ENCODE measurements at regions of chr12 and their contacts with region 1.

Region 1: DNA sequence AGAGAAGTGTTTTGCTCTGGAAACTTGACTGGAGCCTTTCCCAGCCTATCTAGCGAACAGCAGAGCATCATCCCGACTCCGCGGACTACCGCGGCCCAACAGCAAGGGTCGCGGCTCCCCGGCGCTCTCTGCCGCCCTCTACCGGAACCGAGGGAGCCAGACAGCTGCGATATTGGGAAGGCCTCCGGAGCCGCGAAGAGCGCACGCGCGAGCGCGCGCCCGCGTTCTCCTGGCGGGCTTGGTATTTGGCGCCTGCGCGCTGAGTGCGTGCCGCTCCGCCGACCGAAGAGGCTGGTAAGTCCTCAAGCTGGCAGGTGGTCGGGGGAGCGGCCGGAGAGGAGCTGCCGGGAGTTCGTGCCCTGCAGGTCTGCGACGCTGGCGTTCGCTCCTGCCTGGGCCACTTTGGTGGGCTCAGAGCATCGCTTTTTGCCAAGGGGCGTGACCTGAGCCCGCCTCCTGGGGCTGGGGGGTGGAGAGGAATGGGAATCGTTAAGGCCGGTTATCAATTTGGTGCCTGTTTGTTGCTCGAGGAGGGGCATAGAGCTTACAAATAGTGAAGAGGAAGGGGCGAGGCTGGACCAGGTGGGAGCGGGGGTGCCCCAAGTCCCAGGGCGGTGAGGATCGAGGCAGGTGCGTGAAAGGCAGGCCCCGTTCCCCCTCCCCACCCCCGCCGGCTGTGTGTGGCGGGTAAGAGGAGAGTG is at the start of gene TMEM106C:
- DNase-seq: peak; percentile 72 to 89
- H3K4me3 ChIP-seq: peak within 1 kb of the TSS; percentile 85
- H3K27ac ChIP-seq: no peak within 1 kb of the TSS
- H3K4me1 ChIP-seq: peaks cover 6% of the 10 kb centered on the region; the same call in 1 of the 2 replicates
- H3K27me3 ChIP-seq: peaks cover 11% of the 10 kb centered on the region
- CTCF ChIP-seq: peak; percentile 95
- total RNA-seq, gene TMEM106C: 99.4 and 100 TPM in 2 replicates

Region 2: DNA sequence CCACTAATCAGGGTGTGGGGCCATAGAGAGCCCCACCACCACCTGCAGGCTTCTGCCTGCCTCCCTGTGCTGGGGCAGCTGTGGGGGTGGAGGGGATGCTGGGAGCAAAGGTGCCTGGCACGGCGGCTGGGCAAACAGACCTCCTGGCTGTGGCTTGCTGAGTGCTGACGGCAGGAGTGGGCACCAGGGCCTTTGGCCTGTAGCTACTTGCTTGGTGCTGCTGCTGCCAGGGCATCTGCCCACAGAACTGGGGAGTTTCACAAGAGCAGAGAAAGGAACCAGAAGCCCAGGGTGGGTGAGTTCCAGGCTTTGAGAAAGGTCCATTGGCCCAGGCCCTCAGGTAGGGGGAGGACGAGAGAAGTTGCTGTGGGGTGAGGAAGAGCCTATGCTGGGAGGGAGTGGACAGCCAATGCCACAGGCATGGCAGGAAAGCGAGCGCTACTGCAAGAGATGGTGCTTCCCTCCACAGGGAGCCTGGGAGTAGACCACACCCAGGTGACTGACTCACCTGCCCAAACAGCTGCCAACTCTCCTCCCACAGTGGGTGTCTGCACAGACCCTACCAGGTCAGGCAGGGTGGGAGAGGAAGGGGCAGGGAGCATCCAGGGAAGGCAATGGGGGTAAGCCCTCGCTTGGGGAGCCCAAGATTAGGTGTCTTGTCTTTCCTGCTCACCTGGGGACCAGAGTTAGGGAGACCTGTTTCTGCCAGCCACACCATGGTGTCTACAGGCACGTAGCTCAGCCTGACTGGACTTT is 104.8 kb before region 1 on chr12:
- CTCF ChIA-PET with region 1: interaction called, 12 read pairs
- POLR2A ChIA-PET with region 1: no interaction called
- intact Hi-C with region 1: loop called (anchors 5 kb)
- DNase-seq: peak; percentile 54 to 55
- H3K4me3 ChIP-seq: no peak overlapping the region
- H3K27ac ChIP-seq: no peak overlapping the region
- H3K4me1 ChIP-seq: peaks cover 11% of the 10 kb centered on the region
- H3K27me3 ChIP-seq: no peaks in the 10 kb centered on the region
- CTCF ChIP-seq: no peak

Region 3: GRCh38 chr12:47874316-47874715 is 89.2 kb before region 1 on chr12:
- CTCF ChIA-PET with region 1: no interaction called
- POLR2A ChIA-PET with region 1: no interaction called
- intact Hi-C with region 1: no loop called
- DNase-seq: no peak
- H3K4me3 ChIP-seq: no peak overlapping the region
- H3K27ac ChIP-seq: no peak overlapping the region
- H3K4me1 ChIP-seq: no peaks in the 10 kb centered on the region
- H3K27me3 ChIP-seq: no peaks in the 10 kb centered on the region
- CTCF ChIP-seq: no peak

Region 4: DNA sequence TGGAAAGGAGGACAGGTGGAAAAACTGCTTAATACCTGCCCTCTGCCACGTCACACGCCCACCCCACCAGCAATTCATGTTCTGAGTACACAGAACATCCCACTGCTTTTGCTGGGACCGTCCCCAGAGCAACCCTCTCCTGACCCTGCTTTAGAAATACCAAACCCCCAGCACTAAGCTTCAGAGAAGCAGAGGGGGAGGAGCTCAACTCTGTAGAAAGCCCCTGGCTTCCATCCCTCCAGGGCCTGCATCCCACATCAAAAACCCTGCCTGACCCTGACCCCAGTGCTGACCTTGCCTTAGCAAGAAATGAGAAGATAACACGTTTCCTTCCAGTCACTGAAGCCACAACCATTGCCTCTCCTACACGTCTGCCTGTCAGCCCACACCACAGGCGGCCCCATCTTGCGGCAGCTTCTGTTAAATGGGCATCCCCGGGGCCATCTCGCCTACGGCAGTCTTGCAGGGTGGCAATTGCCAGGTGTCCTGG is 78.4 kb before region 1 on chr12:
- CTCF ChIA-PET with region 1: no interaction called
- POLR2A ChIA-PET with region 1: no interaction called
- intact Hi-C with region 1: no loop called
- DNase-seq: no peak
- H3K4me3 ChIP-seq: no peak overlapping the region
- H3K27ac ChIP-seq: no peak overlapping the region
- H3K4me1 ChIP-seq: peaks cover 15% of the 10 kb centered on the region
- H3K27me3 ChIP-seq: no peaks in the 10 kb centered on the region
- CTCF ChIP-seq: no peak

Region 5: DNA sequence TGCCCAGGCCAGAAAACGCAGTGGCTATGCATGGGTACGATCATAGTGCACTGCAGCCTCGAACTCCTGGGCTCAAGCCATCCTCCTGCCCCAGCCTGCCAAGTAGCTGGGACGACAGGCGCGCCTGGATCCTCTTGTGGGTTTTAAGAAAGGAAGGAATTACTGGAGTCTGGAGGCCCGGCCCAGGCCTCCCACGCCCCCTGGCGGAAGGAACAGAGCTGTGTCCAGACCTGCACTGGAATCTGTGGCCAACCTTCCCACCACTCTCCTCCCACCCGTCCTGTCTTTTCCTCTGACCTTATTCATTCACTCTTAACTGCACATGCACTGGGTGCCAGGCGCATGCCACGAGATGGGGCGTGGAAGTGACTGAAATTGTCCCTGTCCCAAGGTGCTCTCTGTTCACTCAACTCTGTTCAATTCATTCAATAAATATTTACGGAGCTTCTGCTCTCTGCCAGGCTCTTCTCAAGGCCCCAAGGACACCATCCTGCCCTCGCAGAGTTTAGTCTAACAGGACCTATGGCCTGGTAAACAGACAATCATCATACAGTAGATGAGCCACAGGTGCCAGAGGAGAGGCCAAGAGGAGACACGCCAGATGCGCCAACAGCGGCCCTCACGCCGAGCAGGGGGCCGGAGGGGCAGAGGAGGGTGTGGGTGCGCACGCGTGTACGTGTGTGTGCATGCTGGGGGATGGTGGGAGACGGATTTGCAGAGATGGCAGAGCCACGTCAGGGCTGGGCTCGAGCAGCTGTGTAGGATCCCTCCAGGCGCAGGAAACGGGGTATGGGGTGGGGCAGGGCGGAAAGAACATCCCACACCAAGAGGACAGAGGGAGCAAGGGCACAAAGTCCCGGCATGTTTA is 13.8 kb before region 1 on chr12:
- CTCF ChIA-PET with region 1: no interaction called
- POLR2A ChIA-PET with region 1: interaction called, 10 read pairs
- intact Hi-C with region 1: no loop called
- DNase-seq: peak; percentile 66 to 79
- H3K4me3 ChIP-seq: no peak overlapping the region
- H3K27ac ChIP-seq: no peak overlapping the region
- H3K4me1 ChIP-seq: peaks cover 51% of the 10 kb centered on the region
- H3K27me3 ChIP-seq: no peaks in the 10 kb centered on the region
- CTCF ChIP-seq: peak; percentile 93

Region 6: GRCh38 chr12:48001505-48002413 is 38.3 kb after region 1 on chr12:
- CTCF ChIA-PET with region 1: no interaction called
- POLR2A ChIA-PET with region 1: no interaction called
- intact Hi-C with region 1: no loop called
- DNase-seq: peak in 1 of 2 experiments; percentile 41
- H3K4me3 ChIP-seq: peak overlapping the region; percentile 78
- H3K27ac ChIP-seq: peak overlapping the region; percentile 48; the same call in 1 of the 2 replicates
- H3K4me1 ChIP-seq: peaks cover 20% of the 10 kb centered on the region
- H3K27me3 ChIP-seq: peaks cover 57% of the 10 kb centered on the region
- CTCF ChIP-seq: no peak

Region 7: DNA sequence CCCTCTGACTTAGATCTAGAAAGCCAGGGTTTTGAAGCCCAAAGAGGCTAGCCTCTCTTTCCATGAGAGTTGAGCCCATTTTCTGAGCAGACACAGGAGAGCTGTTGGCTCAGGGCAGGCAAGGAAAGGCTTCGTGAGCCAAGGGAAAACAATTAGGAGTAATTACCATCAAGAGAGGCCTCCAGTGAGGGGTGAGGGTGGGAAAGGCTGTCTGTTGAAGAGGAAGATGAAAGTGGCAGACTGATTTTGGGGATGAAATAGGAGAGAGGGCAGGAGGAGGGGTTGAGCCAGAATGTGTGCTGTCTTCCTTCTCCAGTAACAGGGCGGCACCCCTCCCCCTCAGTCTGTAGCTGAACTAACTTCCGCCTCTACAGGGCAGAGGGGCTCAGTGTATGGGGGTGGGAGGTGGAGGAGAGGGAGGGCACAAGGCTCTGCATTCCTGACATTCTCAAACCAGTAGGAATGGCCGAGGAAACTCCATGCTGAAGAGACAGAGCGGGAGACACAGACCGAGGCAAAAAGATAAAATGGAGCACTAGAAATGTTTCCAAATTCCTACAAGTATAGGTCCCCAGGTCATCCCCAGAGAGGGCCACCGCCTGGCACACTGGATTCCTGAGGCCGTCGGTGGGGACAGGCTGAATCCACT is 73.9 kb after region 1 on chr12:
- CTCF ChIA-PET with region 1: no interaction called
- POLR2A ChIA-PET with region 1: no interaction called
- intact Hi-C with region 1: no loop called
- DNase-seq: no peak
- H3K4me3 ChIP-seq: no peak overlapping the region
- H3K27ac ChIP-seq: no peak overlapping the region
- H3K4me1 ChIP-seq: no peaks in the 10 kb centered on the region
- H3K27me3 ChIP-seq: no peaks in the 10 kb centered on the region
- CTCF ChIP-seq: no peak

Region 8: DNA sequence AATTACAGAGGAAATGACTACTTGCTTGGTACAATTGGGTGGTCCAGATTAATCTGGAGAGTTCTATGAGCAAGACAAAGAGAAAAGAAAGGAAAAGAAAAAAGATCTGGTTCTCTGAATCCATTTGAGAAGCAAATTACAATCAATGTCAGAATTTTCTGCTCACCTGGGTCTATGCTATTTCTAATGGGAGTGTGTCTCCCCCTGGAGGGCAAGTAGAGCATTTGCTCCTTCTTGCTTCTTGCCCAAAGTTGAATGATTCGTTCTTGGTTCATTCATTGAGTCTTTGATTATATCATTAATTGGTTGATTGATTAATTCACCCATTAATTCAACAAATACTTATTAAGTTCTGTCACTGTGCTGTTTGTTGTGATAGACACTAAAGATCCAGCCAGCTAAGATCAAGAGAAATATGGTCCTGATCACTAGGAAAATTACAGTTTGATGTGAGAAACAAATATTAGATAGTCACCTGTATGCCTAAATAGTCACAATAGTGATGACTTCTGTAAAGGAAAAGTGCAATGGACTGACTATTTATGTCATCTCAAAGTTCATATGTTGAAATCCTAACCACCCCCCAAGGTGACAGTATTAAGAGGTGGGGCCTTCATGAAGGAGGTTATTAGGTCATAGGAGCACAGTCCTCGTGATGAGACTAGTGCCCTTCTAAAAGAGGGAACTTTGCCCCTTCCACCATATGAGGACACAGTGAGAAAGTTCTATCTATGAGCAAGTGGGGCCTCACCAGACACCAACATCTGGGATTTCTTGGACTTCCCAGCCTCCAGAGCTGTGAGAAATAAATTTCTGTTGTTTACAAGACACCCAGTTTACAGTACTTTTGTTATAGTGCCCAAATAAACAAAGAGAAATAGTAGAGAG is 201.8 kb after region 1 on chr12:
- CTCF ChIA-PET with region 1: no interaction called
- POLR2A ChIA-PET with region 1: no interaction called
- intact Hi-C with region 1: loop called (anchors 5 kb)
- DNase-seq: peak in 1 of 2 experiments; percentile 29
- H3K4me3 ChIP-seq: no peak overlapping the region
- H3K27ac ChIP-seq: no peak overlapping the region
- H3K4me1 ChIP-seq: no peaks in the 10 kb centered on the region
- H3K27me3 ChIP-seq: no peaks in the 10 kb centered on the region
- CTCF ChIP-seq: peak; percentile 91